ENCODE measurements at regions of chr22 and their contacts with region 1.

Region 1: GRCh38 chr22:41091132-41092022 is 1.0 kb upstream of the EP300 start:
- DNase-seq: peak; percentile 98 to 99 (median 99)
- ATAC-seq: peak; percentile 95
- H3K4me3 ChIP-seq: peak overlapping the region; percentile 99
- H3K4me3 Mint-ChIP-seq: peak overlapping the region; percentile 91 to 100 (median 98)
- H3K27ac ChIP-seq: peak overlapping the region; percentile 99
- H3K27ac Mint-ChIP-seq: peak overlapping the region; percentile 99 to 100 (median 99)
- H3K4me1 ChIP-seq: peaks cover 4 to 5% of the 10 kb centered on the region in 2 donors
- H3K4me1 Mint-ChIP-seq: peaks cover 23 to 35% (median 27%) of the 10 kb centered on the region in 7 donors
- H3K27me3 ChIP-seq: no peaks in the 10 kb centered on the region
- H3K27me3 Mint-ChIP-seq: peaks cover 0 to 2% (median 0%) of the 10 kb centered on the region in 5 donors

Region 2: GRCh38 chr22:40818747-40819598 is 272.4 kb before region 1 on chr22 and contains the start of gene SLC25A17:
- CTCF ChIA-PET with region 1: no interaction called
- POLR2A ChIA-PET with region 1: no interaction called
- intact Hi-C with region 1: loop called (anchors 1 to 5 kb)
- DNase-seq: peak; percentile 71 to 88 (median 82)
- ATAC-seq: peak; percentile 95
- H3K4me3 ChIP-seq: peak within 1 kb of the TSS; percentile 100
- H3K4me3 Mint-ChIP-seq: peak within 1 kb of the TSS; percentile 79 to 99 (median 93)
- H3K27ac ChIP-seq: peak within 1 kb of the TSS; percentile 86
- H3K27ac Mint-ChIP-seq: peak within 1 kb of the TSS; percentile 57 to 96 (median 88)
- H3K4me1 ChIP-seq: peaks cover 9 to 26% of the 10 kb centered on the region in 2 donors
- H3K4me1 Mint-ChIP-seq: peaks cover 22 to 42% (median 37%) of the 10 kb centered on the region in 7 donors
- H3K27me3 ChIP-seq: no peaks in the 10 kb centered on the region
- H3K27me3 Mint-ChIP-seq: no peaks in the 10 kb centered on the region
- total RNA-seq, gene SLC25A17: 6.8 to 22.1 (median 13.1) TPM

Region 3: DNA sequence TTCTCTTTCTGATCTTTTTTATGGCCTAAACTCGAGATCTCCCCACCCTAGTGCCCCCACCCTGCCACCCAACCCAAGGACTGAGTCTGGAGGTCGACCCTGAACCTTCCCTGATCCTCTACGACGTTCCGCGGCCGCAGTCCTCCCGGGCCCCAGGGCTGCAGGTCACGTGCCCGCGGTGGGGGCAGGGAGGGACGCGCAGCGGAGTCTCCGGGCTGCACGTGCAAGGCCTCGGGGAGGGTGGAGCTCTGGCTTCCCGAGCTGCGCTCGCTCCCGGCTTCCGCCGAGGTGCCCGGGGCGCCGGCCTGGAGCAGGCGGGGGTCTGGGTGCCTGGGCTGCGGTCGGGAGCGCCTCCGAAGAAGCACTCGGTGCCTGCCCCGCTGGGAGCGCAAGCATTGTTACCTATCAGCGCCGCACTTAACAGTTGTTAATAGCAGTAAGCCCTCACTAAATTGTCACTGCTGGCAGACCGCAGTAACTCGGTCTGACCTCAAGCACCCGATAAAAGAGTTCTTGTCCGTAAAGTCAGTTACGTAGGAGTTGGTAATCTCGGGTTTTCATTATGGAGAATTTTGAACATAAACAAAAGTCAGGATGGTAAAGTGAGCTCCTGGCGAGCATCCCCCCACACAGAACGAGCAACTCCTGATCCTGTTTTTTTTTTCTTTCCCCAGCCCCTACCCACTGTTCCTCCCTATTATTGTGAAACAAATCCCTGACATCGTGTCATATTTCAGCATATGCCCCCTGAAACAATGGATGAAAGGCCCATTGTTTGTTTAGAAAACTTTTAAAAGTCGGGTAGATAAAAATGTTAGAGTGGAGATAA is 68.7 kb before region 1 on chr22:
- CTCF ChIA-PET with region 1: no interaction called
- POLR2A ChIA-PET with region 1: interaction called, 25 read pairs
- intact Hi-C with region 1: loop called (anchors 1 kb)
- DNase-seq: peak; percentile 69 to 83 (median 74)
- ATAC-seq: peak; percentile 89
- H3K4me3 ChIP-seq: peak overlapping the region; percentile 57
- H3K4me3 Mint-ChIP-seq: peak overlapping the region; percentile 75 to 91 (median 84)
- H3K27ac ChIP-seq: peak overlapping the region; percentile 82
- H3K27ac Mint-ChIP-seq: peak overlapping the region; percentile 74 to 91 (median 88)
- H3K4me1 ChIP-seq: peaks cover 12 to 13% of the 10 kb centered on the region in 2 donors
- H3K4me1 Mint-ChIP-seq: peaks cover 12 to 23% (median 21%) of the 10 kb centered on the region in 7 donors
- H3K27me3 ChIP-seq: no peaks in the 10 kb centered on the region
- H3K27me3 Mint-ChIP-seq: peaks cover 0 to 14% (median 0%) of the 10 kb centered on the region in 5 donors

Region 4: DNA sequence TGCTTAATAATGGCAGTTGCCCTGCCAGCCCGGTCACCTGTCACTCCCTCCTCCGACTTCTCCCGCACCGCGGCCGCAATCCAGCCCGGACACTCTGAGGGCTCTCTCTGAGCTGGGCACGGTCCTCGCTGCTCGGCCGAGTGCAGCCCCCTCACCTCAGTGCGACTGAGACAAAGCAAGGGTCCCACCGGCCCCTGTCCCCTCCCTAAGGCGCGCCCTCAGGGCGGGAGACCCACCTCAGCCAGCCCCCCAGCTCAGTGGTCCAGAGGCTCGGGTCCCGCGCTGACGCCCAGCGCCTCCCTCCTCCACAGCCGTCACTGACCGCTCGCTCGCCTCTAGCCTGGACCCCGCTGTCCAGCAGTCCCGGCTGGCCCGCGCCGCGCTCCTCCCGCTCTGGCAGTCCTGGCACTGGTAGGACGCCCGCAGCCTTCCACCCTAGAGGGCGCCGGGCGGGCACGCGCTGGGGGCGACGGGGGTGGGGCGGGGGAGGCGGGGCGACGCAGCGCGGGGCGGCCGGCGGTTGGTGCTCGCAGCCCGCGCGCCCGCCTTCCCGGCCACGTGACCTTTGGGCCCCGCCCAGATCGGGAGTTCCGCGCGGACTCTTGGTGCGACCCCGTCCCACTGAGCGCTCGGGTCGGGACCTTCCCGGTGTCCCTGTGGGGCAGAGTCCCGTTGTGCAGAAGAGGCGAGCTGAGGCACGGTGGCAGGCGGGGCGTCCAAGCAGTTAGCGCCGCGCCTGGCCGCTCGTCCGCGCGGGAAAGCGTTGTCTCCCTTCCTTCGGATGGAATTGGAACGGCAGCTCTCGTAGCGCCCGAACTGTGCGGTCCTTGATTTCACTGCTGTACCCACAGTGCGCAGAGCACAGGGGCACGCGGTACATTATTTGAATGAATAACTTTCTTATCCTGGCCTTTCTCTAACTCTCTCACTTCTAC is 105.9 kb after region 1 on chr22:
- CTCF ChIA-PET with region 1: no interaction called
- POLR2A ChIA-PET with region 1: no interaction called
- intact Hi-C with region 1: loop called (anchors 1 to 2 kb)
- DNase-seq: peak; percentile 52 to 91 (median 72)
- ATAC-seq: peak; percentile 95
- H3K4me3 ChIP-seq: peak overlapping the region; percentile 92
- H3K4me3 Mint-ChIP-seq: peak overlapping the region; percentile 88 to 96 (median 92)
- H3K27ac ChIP-seq: peak overlapping the region; percentile 61
- H3K27ac Mint-ChIP-seq: peak overlapping the region in 8 of 9 donors; percentile 35 to 86 (median 60)
- H3K4me1 ChIP-seq: peaks cover 9 to 12% of the 10 kb centered on the region in 2 donors
- H3K4me1 Mint-ChIP-seq: peaks cover 8 to 16% (median 12%) of the 10 kb centered on the region in 7 donors
- H3K27me3 ChIP-seq: no peaks in the 10 kb centered on the region
- H3K27me3 Mint-ChIP-seq: peaks cover 0 to 38% (median 0%) of the 10 kb centered on the region in 5 donors

Region 5: DNA sequence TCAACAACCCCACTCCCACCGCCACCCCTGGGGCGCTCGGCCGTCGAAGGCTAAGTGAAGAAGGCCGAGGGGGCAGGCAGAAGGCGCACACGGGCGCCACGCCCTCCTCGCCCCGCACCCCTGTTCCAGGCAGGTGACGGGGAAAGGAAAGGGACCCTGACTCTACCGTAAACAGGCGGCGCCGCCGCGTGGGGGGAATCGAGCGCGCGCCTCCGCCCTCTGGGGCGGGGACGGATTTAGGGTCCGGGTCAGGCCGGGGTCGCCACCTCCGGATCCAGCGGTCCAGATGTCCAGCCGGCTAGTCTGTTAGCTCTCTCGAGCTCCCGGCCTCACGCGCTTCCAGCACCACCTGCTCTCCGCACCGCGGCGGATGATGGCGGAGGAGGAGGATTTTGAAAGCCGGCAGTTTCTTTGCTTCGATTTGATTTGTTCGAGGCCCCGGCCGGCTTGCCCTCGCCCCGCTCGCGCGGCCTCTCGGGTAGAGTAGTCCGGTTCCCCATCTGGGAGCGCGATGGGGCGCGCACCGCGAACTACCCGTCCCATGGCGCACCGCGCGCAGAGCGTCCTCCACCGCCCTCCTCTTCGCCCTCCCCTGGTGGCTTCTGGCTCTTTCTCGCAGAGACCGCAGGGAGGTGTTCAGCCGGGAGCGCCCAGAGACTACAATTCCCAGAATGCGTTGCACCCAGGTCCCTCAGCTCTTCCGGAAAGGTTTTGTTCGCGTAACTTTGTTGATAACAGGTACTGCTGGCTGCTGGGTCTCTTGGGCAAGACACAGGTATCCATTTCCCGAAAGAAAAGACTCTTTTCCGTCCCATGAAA is 194.7 kb after region 1 on chr22 and contains the start of gene RANGAP1:
- CTCF ChIA-PET with region 1: no interaction called
- POLR2A ChIA-PET with region 1: interaction called, 7 read pairs
- intact Hi-C with region 1: loop called (anchors 1 kb)
- DNase-seq: peak; percentile 95 to 99 (median 99)
- ATAC-seq: peak; percentile 96
- H3K4me3 ChIP-seq: peak within 1 kb of the TSS; percentile 93
- H3K4me3 Mint-ChIP-seq: peak within 1 kb of the TSS; percentile 90 to 99 (median 96)
- H3K27ac ChIP-seq: peak within 1 kb of the TSS; percentile 99
- H3K27ac Mint-ChIP-seq: peak within 1 kb of the TSS; percentile 95 to 99 (median 98)
- H3K4me1 ChIP-seq: peaks cover 10 to 15% of the 10 kb centered on the region in 2 donors
- H3K4me1 Mint-ChIP-seq: peaks cover 21 to 46% (median 42%) of the 10 kb centered on the region in 7 donors
- H3K27me3 ChIP-seq: no peaks in the 10 kb centered on the region
- H3K27me3 Mint-ChIP-seq: no peaks in the 10 kb centered on the region
- total RNA-seq, gene RANGAP1: 60.7 to 122 (median 72.4) TPM

Region 6: DNA sequence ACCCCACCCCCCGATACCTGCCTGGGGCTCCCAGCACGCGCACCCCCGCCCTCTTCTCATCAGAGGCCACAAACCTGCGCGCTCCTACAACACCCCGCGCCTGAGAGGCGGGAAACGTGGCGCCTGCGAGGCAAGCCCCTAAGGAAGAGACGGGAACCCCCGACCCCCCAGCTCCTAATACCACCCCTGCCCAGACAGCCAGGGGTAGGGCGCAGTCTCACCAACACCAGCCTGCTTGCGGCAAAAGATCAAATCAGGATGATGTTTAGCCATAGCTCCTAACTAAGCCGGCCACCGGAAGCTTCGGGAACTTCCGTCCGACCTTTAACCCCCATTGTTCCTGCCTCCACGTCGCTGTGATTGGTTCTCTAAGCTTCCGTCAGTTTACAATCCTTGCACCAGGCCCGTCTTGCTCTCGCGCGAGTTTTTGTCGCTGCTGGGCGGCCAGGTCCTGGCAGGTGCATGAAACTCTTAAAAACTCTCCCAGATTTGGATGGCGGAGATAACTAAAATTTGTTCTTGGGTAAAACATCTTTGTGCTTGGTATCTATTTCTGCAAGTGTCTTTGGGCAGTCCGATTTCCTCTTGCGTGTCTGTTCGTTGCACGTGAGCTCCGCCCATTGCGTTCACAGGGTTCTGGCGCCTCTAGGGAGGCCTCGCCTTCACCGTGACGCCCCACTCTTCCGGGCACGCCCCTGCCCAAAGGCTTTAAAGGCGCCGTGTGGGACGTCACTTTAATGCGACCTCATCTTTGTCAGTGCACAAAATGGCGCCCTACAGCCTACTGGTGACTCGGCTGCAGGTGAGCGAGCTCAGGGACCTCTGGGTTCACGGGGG is 377.2 kb after region 1 on chr22 and contains the starts of genes ACO2 and PHF5A:
- CTCF ChIA-PET with region 1: no interaction called
- POLR2A ChIA-PET with region 1: interaction called, 3 read pairs
- intact Hi-C with region 1: loop called in 1 of 2 experiments (anchors 1 kb)
- DNase-seq: peak; percentile 93 to 99 (median 98)
- ATAC-seq: peak; percentile 96
- H3K4me3 ChIP-seq: peak within 1 kb of the TSS; percentile 76
- H3K4me3 Mint-ChIP-seq: peak within 1 kb of the TSS; percentile 88 to 94 (median 91)
- H3K27ac ChIP-seq: peak within 1 kb of the TSS; percentile 89
- H3K27ac Mint-ChIP-seq: peak within 1 kb of the TSS; percentile 98 to 100 (median 99)
- H3K4me1 ChIP-seq: peaks cover 19 to 20% of the 10 kb centered on the region in 2 donors
- H3K4me1 Mint-ChIP-seq: peaks cover 18 to 75% (median 59%) of the 10 kb centered on the region in 7 donors
- H3K27me3 ChIP-seq: no peaks in the 10 kb centered on the region
- H3K27me3 Mint-ChIP-seq: no peaks in the 10 kb centered on the region
- total RNA-seq, gene ACO2: 64.5 to 84.8 (median 70.3) TPM
- total RNA-seq, gene PHF5A: 27.8 to 63.9 (median 36.0) TPM